ENCODE measurements at regions of chr2 and their contacts with region 1.

Region 1: DNA sequence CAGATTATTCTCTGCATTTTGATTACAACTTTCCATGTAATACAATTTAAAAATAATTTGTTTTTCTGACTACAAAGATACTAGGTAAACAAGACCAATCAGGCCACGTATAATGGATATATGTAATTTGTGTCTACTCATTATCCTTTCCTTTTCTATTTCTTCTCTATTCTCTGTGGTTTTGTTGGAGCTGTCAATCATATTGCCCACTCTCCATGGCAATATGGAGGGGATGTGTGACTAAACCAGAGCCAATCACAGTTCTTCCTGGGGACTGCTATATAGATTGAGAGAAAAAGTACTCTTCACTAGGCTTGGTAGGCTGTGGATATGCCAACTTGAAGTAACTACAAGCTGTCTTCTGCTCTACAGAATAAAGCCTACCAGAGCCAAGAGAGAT is 144.7 kb downstream of the DNAH7 start:
- DNase-seq: no peak
- H3K4me3 ChIP-seq: no peak overlapping the region
- H3K27ac ChIP-seq: no peak overlapping the region
- H3K4me1 ChIP-seq: no peaks in the 10 kb centered on the region
- H3K27me3 ChIP-seq: no peaks in the 10 kb centered on the region
- CTCF ChIP-seq: no peak

Region 2: GRCh38 chr2:195732574-195732973 is 191.3 kb before region 1 on chr2:
- CTCF ChIA-PET with region 1: no interaction called
- POLR2A ChIA-PET with region 1: interaction called, 17 read pairs
- intact Hi-C with region 1: no loop called
- DNase-seq: no peak
- H3K4me3 ChIP-seq: no peak overlapping the region
- H3K27ac ChIP-seq: no peak overlapping the region
- H3K4me1 ChIP-seq: no peaks in the 10 kb centered on the region
- H3K27me3 ChIP-seq: no peaks in the 10 kb centered on the region
- CTCF ChIP-seq: no peak